Right ventricle myocardium superior (tissue), 1 donor: ENCODE measurements at regions of chr3 and their contacts with region 1.

Region 1: GRCh38 chr3:12287727-12288191 is 1.1 kb upstream of the PPARG start:
- DNase-seq: peak; percentile 73
- ATAC-seq: peak; percentile 92

Region 2: DNA sequence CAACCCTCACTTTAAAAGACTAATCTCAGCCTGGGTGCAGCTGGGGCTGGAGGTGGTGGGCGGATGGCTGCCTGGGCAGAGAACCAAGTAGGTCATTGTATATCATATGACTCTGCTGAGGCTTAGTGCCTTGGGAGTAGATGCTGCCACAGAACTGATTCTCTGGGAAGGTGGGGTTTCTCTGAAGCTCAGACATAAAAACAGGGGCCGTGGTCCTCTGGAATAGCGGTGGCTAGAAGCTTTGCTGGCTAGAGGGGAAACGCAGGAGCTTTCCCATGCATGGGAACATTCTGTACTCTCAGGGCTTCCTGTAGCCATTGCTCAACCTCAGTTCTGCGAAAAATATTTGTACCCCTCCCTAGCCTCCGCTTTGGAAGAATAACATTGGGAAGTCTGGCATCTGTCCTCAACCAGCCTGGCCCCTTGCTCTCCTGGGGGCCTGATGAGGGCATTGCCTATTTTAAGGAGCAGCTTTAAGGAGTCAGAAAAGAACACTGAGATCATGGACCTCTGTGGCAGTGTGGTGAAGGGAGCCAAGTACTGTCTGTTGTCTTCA is 143.7 kb before region 1 on chr3:
- intact Hi-C with region 1: loop called (anchors 10 kb)
- DNase-seq: peak; percentile 77
- ATAC-seq: peak; percentile 90